ENCODE measurements at regions of chr4 and their contacts with region 1.

Region 1: DNA sequence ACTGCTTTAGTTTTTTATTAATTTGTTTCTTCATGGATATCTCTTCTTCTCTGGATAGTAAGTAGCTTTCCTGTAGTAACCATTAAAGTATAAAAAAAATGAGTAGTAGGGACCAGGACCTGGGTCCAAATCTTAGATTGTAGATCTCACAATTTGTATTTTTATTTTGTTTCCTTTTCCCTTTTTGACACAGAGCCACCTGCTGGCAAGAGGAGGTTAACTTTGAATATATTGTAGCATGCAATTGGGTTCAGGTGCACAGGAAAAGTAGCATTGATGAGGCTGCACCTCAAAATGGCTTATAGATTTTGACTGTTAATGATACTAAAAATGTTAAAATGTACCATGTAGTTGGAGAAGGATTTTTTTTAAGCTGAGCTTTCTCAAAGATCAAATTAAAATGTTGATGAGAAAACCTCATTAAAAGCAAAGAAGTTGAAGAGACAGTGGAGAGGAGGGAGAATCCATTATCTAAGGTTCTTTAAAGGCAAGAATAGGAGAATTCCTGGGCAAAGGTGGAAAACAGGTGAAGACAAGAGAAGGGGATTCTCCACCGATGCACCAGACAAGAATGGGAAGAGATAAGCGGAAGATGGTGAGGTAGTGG is 48.3 kb upstream of the HPGDS start:
- DNase-seq: peak; percentile 46
- H3K4me3 ChIP-seq: no peak overlapping the region
- H3K27ac ChIP-seq: no peak overlapping the region
- H3K4me1 ChIP-seq: no peaks in the 10 kb centered on the region
- H3K27me3 ChIP-seq: peaks cover 18% of the 10 kb centered on the region; the same call in 1 of the 2 replicates

Region 2: DNA sequence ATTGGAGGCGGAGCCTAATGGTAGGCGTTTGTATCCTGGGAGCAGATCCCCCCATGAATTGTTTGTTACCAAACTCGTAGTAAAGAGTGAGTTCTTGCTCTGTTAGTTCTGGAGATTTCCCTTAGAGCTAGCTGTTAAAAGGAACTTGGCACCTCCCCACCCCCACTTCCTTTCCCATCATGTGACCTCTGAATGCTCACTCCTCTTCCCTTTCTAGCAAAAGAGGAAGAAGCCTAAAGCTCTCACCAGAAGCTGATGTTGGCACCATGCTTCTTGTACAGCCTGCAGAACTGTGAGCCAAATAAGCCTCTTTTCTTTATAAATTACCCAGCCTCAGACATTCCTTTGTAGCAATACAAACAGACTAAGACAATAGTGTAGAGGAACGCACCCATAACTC is 576.2 kb before region 1 on chr4:
- in situ Hi-C with region 1: loop called (anchors 25 kb)
- DNase-seq: no peak
- H3K4me3 ChIP-seq: no peak overlapping the region
- H3K27ac ChIP-seq: no peak overlapping the region
- H3K4me1 ChIP-seq: no peaks in the 10 kb centered on the region
- H3K27me3 ChIP-seq: no peaks in the 10 kb centered on the region